AG04449 (cell line): ENCODE measurements at regions of chr11 and their contacts with region 1.

Region 1: GRCh38 chr11:94623120-94623735 is 56.1 kb downstream of the PIWIL4 start:
- DNase-seq: peak; percentile 10
- H3K4me3 ChIP-seq: no peak overlapping the region
- CTCF ChIP-seq: peak; percentile 73

Region 2: GRCh38 chr11:94151903-94152677 is 471.1 kb before region 1 on chr11:
- CTCF ChIA-PET with region 1: no interaction called
- POLR2A ChIA-PET with region 1: no interaction called
- DNase-seq: no peak
- H3K4me3 ChIP-seq: no peak overlapping the region
- CTCF ChIP-seq: no peak

Region 3: GRCh38 chr11:94342250-94342649 is 281.0 kb before region 1 on chr11:
- CTCF ChIA-PET with region 1: no interaction called
- POLR2A ChIA-PET with region 1: no interaction called
- DNase-seq: no peak
- H3K4me3 ChIP-seq: no peak overlapping the region
- CTCF ChIP-seq: no peak

Region 4: GRCh38 chr11:94493281-94494125 is 129.7 kb before region 1 on chr11 and contains the starts of genes ANKRD49 and MRE11:
- CTCF ChIA-PET with region 1: no interaction called
- POLR2A ChIA-PET with region 1: no interaction called
- DNase-seq: peak; percentile 81
- H3K4me3 ChIP-seq: peak within 1 kb of the TSS; percentile 88
- CTCF ChIP-seq: no peak

Region 5: DNA sequence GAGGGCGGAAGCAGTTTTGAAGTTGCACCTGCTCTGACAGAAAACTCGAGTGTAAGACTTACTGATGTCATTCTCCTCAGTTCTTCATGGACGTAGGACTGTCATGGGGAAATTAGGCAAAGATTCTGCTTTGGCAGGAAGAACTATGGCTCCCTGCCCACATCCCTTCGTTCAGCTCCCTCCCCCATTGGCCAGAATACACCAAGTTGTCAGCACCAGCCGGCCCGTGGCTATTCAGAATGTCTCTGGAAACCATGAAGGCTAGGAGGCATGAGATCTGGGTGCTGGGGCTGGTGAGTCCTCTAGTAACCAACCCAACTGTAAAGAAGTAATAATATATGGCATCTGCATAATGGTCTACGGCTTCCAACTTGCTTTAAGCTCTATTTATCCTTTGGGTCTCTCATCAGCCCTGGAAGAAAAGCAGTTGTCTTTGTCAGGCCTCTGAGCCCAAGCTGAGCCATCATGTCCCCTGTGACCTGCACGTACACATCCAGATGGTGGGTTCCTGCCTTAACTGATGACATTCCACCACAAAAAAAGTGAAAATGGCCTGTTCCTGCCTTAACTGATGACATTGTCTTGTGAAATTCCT is 18.0 kb after region 1 on chr11:
- CTCF ChIA-PET with region 1: interaction called, 10 read pairs
- POLR2A ChIA-PET with region 1: no interaction called
- DNase-seq: no peak
- H3K4me3 ChIP-seq: no peak overlapping the region
- CTCF ChIP-seq: no peak

Region 6: DNA sequence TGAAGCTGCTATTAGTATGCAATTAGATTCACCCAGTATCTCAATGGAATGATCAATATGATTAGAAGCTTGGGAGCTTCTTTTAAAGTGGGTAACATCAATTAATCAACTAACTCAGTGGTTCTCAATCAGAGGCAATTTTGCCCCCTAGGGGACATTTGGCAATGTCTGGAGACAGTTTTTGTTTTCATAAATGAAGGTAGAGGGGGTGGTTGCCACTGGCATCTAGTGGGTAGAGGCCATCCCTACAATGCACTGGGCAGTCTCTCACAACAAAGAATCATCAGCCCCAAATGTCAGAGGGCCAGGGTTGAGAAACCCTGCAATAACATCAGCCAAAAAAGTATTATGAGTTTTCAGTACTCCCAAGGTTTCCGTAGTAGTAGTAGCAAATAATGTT is 139.0 kb after region 1 on chr11:
- CTCF ChIA-PET with region 1: interaction called, 13 read pairs
- POLR2A ChIA-PET with region 1: no interaction called
- DNase-seq: no peak
- H3K4me3 ChIP-seq: no peak overlapping the region
- CTCF ChIP-seq: no peak

Region 7: DNA sequence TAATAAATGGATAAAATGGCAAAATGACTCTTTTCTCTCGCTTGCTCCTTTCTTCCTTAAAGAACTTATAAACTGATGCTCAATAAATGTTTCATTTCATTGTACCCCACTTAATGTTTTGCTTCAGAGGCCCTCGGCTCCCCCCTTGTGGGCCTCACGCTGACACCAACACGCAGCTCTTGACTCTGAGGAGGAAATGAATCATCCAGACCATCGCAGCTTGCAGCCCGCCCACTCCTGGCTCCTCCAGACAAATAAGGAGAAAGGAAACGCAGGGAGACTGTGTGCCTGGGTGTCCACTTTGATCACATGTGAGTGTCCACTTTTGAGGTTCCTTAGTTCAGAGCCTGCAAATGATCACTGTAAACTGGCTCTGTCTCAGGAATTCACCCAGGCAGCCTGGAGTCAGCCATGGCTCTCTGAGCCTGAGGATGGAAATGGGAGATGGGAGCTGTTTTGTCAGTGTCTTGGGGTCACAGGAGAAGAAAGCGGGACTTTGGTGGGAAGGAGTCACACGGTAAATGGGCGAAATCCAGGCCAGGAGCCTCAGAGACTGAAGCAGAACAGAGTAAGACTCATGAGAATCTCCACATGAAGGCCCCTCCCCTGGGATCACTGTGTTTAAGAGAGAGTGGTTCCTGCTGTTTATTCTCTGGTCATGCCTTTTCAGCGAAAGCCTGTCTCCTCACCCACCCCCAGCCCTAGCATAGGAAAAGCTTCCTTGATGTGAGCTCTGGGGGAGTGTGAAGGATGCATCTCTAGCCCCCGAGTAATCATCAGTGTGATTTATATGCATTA is 253.6 kb after region 1 on chr11:
- CTCF ChIA-PET with region 1: interaction called, 15 read pairs
- POLR2A ChIA-PET with region 1: no interaction called
- DNase-seq: peak; percentile 87
- H3K4me3 ChIP-seq: no peak overlapping the region
- CTCF ChIP-seq: peak; percentile 31

Region 8: GRCh38 chr11:94958121-94958696 is 335.0 kb after region 1 on chr11:
- CTCF ChIA-PET with region 1: interaction called, 28 read pairs
- POLR2A ChIA-PET with region 1: no interaction called
- DNase-seq: no peak
- H3K4me3 ChIP-seq: no peak overlapping the region
- CTCF ChIP-seq: no peak